ENCODE measurements at regions of chr2 and their contacts with region 1.

Region 1: GRCh38 chr2:182920631-182921056 is 54.2 kb upstream of the FRZB start:
- DNase-seq: no peak
- H3K4me3 ChIP-seq: no peak overlapping the region
- H3K27ac ChIP-seq: no peak overlapping the region
- H3K4me1 ChIP-seq: peaks cover 2% of the 10 kb centered on the region
- H3K27me3 ChIP-seq: no peaks in the 10 kb centered on the region
- CTCF ChIP-seq: no peak

Region 2: DNA sequence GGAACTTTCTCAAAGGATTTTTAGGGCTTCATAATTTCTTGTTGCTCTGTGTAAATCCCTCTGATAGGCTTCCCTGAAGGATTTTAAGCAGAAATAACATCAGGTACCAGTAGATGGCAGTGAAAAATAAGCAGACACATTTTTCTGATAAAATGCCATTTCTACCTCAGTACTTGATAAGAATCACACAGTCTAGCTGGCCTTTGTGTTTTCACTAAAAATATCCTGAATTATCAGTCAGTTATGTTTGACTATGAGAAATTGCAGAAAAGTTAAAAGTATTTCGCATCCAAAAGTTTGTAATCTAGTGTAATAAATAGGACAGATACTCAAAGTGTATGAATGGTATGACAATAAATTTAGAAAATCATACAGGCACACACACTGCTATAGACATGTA is 135.9 kb before region 1 on chr2:
- intact Hi-C with region 1: loop called (anchors 5 kb)
- DNase-seq: no peak
- H3K4me3 ChIP-seq: no peak overlapping the region
- H3K27ac ChIP-seq: no peak overlapping the region
- H3K4me1 ChIP-seq: no peaks in the 10 kb centered on the region
- H3K27me3 ChIP-seq: no peaks in the 10 kb centered on the region
- CTCF ChIP-seq: peak; percentile 68

Region 3: GRCh38 chr2:183078465-183079138 is 158.0 kb after region 1 on chr2 and contains the start of gene DUSP19:
- intact Hi-C with region 1: no loop called
- DNase-seq: peak; percentile 77
- H3K4me3 ChIP-seq: peak within 1 kb of the TSS; percentile 82
- H3K27ac ChIP-seq: peak within 1 kb of the TSS; percentile 93
- H3K4me1 ChIP-seq: peaks cover 37% of the 10 kb centered on the region
- H3K27me3 ChIP-seq: no peaks in the 10 kb centered on the region
- CTCF ChIP-seq: no peak
- total RNA-seq, gene DUSP19: 11.4 TPM